Activated T-helper 1 cell treated with anti-CD3 and anti-CD28 coated beads, Interleukin-12 subunit alpha, Interleukin-12 subunit beta, Interleukin-2, Interleukin-4 antibody, amounts not matched to agents 30 ng/mL and 10 ng/mL and 1 ng/mL, durations not matched to agents 14 hours and 24 hours and 36 hours (primary cell): ENCODE measurements at regions of chr12 and their contacts with region 1.

Region 1: GRCh38 chr12:69157023-69157655 is 82.2 kb upstream of the CPSF6 start:
- DNase-seq: peak; percentile 85
- H3K4me3 Mint-ChIP-seq: peak overlapping the region; percentile 30
- H3K27ac Mint-ChIP-seq: peak overlapping the region; percentile 45
- H3K4me1 Mint-ChIP-seq: peaks cover 45% of the 10 kb centered on the region
- H3K27me3 Mint-ChIP-seq: no peaks in the 10 kb centered on the region

Region 2: DNA sequence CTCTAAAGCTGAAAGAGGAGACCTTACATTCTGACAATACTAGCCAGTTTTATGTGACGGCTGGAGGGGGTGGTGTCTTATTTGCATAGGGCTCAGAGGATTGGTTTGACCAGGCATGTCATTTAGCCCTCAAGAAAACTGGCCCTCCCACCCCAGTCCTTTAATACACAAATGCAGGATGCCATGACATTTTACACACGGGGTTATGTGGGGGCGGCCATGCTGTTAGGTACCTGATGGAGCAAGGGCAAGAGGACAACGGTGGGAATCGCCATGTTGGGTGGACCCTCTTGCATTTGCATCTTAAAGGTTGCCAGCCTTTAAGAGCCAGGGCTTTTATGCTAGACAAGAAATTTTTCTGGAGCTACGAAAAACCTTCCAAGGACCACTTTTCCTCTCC is 325.9 kb before region 1 on chr12:
- intact Hi-C with region 1: loop called (anchors 1 kb)
- DNase-seq: no peak
- H3K4me3 Mint-ChIP-seq: no peak overlapping the region
- H3K27ac Mint-ChIP-seq: no peak overlapping the region
- H3K4me1 Mint-ChIP-seq: peaks cover 29% of the 10 kb centered on the region
- H3K27me3 Mint-ChIP-seq: no peaks in the 10 kb centered on the region

Region 3: GRCh38 chr12:69141074-69141473 is 16.1 kb before region 1 on chr12:
- intact Hi-C with region 1: no loop called
- DNase-seq: no peak
- H3K4me3 Mint-ChIP-seq: no peak overlapping the region
- H3K27ac Mint-ChIP-seq: no peak overlapping the region
- H3K4me1 Mint-ChIP-seq: no peaks in the 10 kb centered on the region
- H3K27me3 Mint-ChIP-seq: peaks cover 1% of the 10 kb centered on the region

Region 4: GRCh38 chr12:69196302-69197288 is 39.5 kb after region 1 on chr12:
- intact Hi-C with region 1: loop called (anchors 1 kb)
- DNase-seq: no peak
- H3K4me3 Mint-ChIP-seq: no peak overlapping the region
- H3K27ac Mint-ChIP-seq: no peak overlapping the region
- H3K4me1 Mint-ChIP-seq: no peaks in the 10 kb centered on the region
- H3K27me3 Mint-ChIP-seq: no peaks in the 10 kb centered on the region

Region 5: GRCh38 chr12:69254046-69254445 is 96.9 kb after region 1 on chr12:
- intact Hi-C with region 1: loop called (anchors 1 kb)
- DNase-seq: no peak
- H3K4me3 Mint-ChIP-seq: no peak overlapping the region
- H3K27ac Mint-ChIP-seq: peak overlapping the region; percentile 52
- H3K4me1 Mint-ChIP-seq: peaks cover 41% of the 10 kb centered on the region
- H3K27me3 Mint-ChIP-seq: no peaks in the 10 kb centered on the region

Region 6: DNA sequence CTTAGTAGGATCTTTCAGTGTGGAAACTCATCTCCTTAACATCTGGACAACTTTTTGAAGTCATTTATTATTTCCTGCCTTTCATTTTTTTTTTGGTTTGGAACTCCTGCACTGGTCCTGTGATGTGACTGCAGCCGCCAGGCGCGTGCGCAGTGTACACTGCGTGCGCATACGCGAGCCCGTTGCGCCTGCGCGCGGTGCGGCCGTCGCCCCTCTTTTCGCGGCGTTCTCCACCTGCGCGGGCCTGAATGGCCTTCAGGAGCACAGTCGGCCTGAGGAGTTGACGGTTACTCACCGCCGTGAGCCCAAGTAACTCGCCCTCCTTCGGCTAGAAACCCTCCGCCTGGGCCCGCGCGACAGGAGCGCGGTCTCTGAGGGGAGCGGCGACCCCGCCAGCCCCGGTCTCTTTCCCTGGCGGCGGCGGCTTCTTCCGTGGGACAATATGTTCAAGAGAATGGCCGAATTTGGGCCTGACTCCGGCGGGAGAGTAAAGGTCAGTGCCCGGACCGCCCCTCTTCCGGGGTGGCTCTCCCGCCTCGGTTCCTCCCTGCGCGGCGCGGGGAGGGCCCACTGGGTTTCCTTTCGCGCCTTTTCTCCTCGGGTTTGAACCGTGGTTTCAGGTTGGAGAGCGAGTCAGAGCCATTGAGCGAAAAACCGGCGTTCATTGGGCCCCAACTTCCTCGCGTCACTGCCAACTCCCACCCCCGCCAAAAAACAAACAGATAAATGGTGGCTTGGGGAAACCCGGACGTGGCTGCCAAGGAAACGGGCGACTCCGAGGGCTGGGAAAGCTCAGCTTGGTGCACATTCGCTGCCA is 202.6 kb after region 1 on chr12 and contains the start of gene YEATS4:
- intact Hi-C with region 1: loop called (anchors 1 kb)
- DNase-seq: peak; percentile 88
- H3K4me3 Mint-ChIP-seq: peak within 1 kb of the TSS; percentile 94
- H3K27ac Mint-ChIP-seq: peak within 1 kb of the TSS; percentile 89
- H3K4me1 Mint-ChIP-seq: peaks cover 33% of the 10 kb centered on the region
- H3K27me3 Mint-ChIP-seq: peaks cover 3% of the 10 kb centered on the region
- total RNA-seq, gene YEATS4: 45.2 and 47.2 TPM in 2 replicates

Region 7: GRCh38 chr12:69570545-69571399 is 413.6 kb after region 1 on chr12:
- intact Hi-C with region 1: loop called (anchors 2 kb)
- DNase-seq: peak; percentile 38
- H3K4me3 Mint-ChIP-seq: no peak overlapping the region
- H3K27ac Mint-ChIP-seq: no peak overlapping the region
- H3K4me1 Mint-ChIP-seq: peaks cover 10% of the 10 kb centered on the region
- H3K27me3 Mint-ChIP-seq: no peaks in the 10 kb centered on the region

Region 8: GRCh38 chr12:69639400-69640016 is 482.4 kb after region 1 on chr12:
- intact Hi-C with region 1: loop called (anchors 1 kb)
- DNase-seq: peak; percentile 34
- H3K4me3 Mint-ChIP-seq: no peak overlapping the region
- H3K27ac Mint-ChIP-seq: no peak overlapping the region
- H3K4me1 Mint-ChIP-seq: peaks cover 4% of the 10 kb centered on the region
- H3K27me3 Mint-ChIP-seq: peaks cover 5% of the 10 kb centered on the region

Region 9: DNA sequence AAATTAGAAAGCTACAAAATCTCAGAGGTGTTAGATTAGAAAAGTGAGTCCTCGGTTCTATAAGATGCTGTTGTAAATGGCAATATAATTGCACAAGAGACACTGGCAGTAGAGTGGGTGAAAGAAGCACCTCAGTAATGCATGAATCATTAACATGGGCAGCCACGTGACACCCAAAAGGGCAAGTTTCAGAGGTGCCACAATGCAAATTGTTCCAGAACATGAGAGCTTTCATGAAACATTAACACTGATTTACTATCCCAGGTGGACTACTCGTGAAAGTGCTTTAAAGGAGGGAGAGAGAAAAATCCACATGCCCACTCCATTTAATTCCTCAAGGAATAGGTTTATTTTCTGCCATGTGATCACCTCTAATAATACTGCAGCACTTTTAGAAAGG is 1655.0 kb after region 1 on chr12:
- intact Hi-C with region 1: no loop called
- DNase-seq: no peak
- H3K4me3 Mint-ChIP-seq: no peak overlapping the region
- H3K27ac Mint-ChIP-seq: no peak overlapping the region
- H3K4me1 Mint-ChIP-seq: no peaks in the 10 kb centered on the region
- H3K27me3 Mint-ChIP-seq: no peaks in the 10 kb centered on the region